Caco-2 (cell line): ENCODE measurements at regions of chr11 and their contacts with region 1.

Region 1: DNA sequence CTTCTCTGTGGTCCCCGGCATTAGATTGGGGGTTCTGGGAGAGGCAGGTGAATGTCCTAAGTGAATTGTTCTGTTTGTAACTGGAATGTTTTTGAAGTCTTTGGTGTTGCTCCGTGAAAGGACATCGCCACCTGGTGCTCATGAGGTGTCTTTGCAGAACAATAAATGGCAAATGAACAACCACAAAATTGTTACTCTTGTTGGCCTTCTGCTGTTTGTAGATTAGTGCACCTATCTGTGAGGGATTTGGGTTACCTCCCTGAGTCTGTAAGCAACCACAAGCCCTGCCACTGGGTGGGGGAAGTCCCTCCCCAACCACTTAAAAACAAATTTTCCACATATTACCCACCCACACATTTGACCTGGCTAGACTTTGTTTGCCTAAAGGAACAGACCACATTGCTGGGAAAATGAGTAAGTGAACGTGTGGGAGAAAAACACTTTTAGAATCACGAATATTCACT is 4.7 kb downstream of the MPEG1 start:
- DNase-seq: peak in 1 of 2 experiments; percentile 40
- H3K4me3 ChIP-seq: no peak overlapping the region
- H3K4me3 Mint-ChIP-seq: no peak overlapping the region
- H3K27ac Mint-ChIP-seq: no peak overlapping the region
- H3K4me1 ChIP-seq: no peaks in the 10 kb centered on the region
- H3K4me1 Mint-ChIP-seq: peaks cover 6% of the 10 kb centered on the region
- H3K27me3 ChIP-seq: no peaks in the 10 kb centered on the region
- H3K27me3 Mint-ChIP-seq: no peaks in the 10 kb centered on the region
- CTCF ChIP-seq: peak; percentile 59 to 80

Region 2: GRCh38 chr11:59263225-59263894 is 55.3 kb after region 1 on chr11:
- CTCF ChIA-PET with region 1: no interaction called
- POLR2A ChIA-PET with region 1: no interaction called
- intact Hi-C with region 1: no loop called
- DNase-seq: peak; percentile 49 to 54
- H3K4me3 ChIP-seq: no peak overlapping the region
- H3K4me3 Mint-ChIP-seq: no peak overlapping the region
- H3K27ac Mint-ChIP-seq: no peak overlapping the region
- H3K4me1 ChIP-seq: no peaks in the 10 kb centered on the region
- H3K4me1 Mint-ChIP-seq: no peaks in the 10 kb centered on the region
- H3K27me3 ChIP-seq: no peaks in the 10 kb centered on the region
- H3K27me3 Mint-ChIP-seq: peaks cover 3% of the 10 kb centered on the region
- CTCF ChIP-seq: peak; percentile 51 to 70

Region 3: GRCh38 chr11:59283825-59284772 is 76.1 kb after region 1 on chr11:
- CTCF ChIA-PET with region 1: no interaction called
- POLR2A ChIA-PET with region 1: no interaction called
- intact Hi-C with region 1: loop called (anchors 1 kb)
- DNase-seq: peak in 1 of 2 experiments; percentile 47
- H3K4me3 ChIP-seq: no peak overlapping the region
- H3K4me3 Mint-ChIP-seq: no peak overlapping the region
- H3K27ac Mint-ChIP-seq: no peak overlapping the region
- H3K4me1 ChIP-seq: no peaks in the 10 kb centered on the region
- H3K4me1 Mint-ChIP-seq: no peaks in the 10 kb centered on the region
- H3K27me3 ChIP-seq: no peaks in the 10 kb centered on the region
- H3K27me3 Mint-ChIP-seq: peaks cover 5% of the 10 kb centered on the region
- CTCF ChIP-seq: peak; percentile 84 to 88

Region 4: DNA sequence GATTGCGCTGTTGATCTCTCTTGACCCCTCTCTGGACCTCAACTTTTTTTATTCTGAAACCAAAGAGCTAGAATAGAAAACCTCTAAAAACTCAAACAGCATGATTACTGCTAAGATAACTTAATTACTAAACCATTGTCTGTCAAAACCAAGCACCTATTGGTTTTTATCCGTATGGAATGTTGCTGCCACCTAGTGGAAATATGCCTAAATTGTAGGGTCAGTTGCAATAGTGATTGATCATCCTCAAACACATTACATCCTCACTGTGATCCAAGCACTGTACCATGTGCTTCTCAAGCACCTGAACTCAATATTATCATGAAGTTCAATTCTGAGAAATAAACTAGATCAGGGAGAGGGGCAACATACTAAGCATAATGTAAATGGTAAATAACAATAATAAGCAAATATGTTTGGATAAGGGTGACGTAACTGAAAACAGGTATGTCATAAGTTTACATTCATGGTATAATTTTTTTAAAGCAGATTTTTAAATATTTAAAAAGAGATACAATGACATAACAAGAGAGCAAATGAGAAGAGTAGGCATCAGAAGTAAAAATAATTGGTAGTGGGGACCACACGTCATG is 222.0 kb after region 1 on chr11:
- CTCF ChIA-PET with region 1: no interaction called
- POLR2A ChIA-PET with region 1: no interaction called
- intact Hi-C with region 1: loop called (anchors 1 kb)
- DNase-seq: peak; percentile 46 to 68
- H3K4me3 ChIP-seq: no peak overlapping the region
- H3K4me3 Mint-ChIP-seq: no peak overlapping the region
- H3K27ac Mint-ChIP-seq: no peak overlapping the region
- H3K4me1 ChIP-seq: no peaks in the 10 kb centered on the region
- H3K4me1 Mint-ChIP-seq: no peaks in the 10 kb centered on the region
- H3K27me3 ChIP-seq: no peaks in the 10 kb centered on the region
- H3K27me3 Mint-ChIP-seq: peaks cover 3% of the 10 kb centered on the region
- CTCF ChIP-seq: peak; percentile 68 to 74